ENCODE measurements at regions of chr5 and their contacts with region 1.

Region 1: DNA sequence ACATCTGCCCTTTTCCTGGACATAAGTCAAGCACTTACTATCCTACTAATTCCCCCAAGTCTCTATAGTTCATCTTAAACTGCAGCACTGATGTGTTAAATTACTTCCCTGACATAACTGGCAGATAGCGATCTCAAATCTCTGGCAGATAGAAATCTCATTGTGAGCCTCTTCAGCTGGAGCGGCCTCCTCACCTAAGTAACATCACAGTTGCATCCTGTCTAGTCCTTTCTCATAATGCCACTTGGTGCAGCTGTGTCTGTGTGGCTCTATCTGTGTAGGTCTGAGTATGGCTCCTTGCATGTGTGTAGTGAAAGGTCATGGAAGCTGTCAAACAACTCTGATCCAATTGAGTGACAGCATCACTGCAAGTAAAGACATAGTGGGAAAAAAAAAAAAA is 53.6 kb upstream of the FST start:
- DNase-seq: no peak
- H3K4me3 ChIP-seq: no peak overlapping the region
- H3K27me3 ChIP-seq: no peaks in the 10 kb centered on the region
- CTCF ChIP-seq: no peak

Region 2: GRCh38 chr5:53399926-53400697 is 26.8 kb before region 1 on chr5:
- CTCF ChIA-PET with region 1: no interaction called
- POLR2A ChIA-PET with region 1: no interaction called
- DNase-seq: no peak
- H3K4me3 ChIP-seq: no peak overlapping the region
- H3K27me3 ChIP-seq: no peaks in the 10 kb centered on the region
- CTCF ChIP-seq: no peak

Region 3: GRCh38 chr5:53469946-53470687 is 43.2 kb after region 1 on chr5:
- CTCF ChIA-PET with region 1: no interaction called
- POLR2A ChIA-PET with region 1: interaction called, 10 read pairs
- DNase-seq: no peak
- H3K4me3 ChIP-seq: no peak overlapping the region
- H3K27me3 ChIP-seq: no peaks in the 10 kb centered on the region
- CTCF ChIP-seq: no peak

Region 4: DNA sequence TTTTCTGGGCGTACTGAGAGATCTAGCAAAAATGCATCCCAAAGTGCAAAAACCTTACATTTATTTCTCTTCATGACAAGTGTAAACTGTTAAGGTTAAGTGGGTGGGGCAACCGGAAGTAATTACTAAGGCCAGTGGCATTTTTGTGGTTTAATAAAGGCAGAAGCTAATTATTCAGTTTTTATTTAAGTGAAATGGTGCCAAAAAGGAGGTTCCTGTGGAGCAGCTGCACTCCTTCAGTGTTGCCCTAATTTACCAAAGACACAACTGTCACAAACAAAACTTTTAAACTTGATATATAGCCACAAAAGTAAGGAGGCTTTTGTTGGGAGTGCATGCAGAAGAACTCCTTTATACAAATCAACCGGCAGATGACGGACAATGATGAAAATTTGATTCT is 215.2 kb after region 1 on chr5:
- CTCF ChIA-PET with region 1: no interaction called
- POLR2A ChIA-PET with region 1: no interaction called
- DNase-seq: peak; percentile 9
- H3K4me3 ChIP-seq: no peak overlapping the region
- H3K27me3 ChIP-seq: no peaks in the 10 kb centered on the region
- CTCF ChIP-seq: no peak

Measured in BJ (cell line).